CD4-positive, alpha-beta T cell (primary cell): ENCODE measurements at regions of chr9 and their contacts with region 1.

Region 1: GRCh38 chr9:134325817-134326723 is at the start of gene RXRA:
- DNase-seq: peak; percentile 47 to 90 (median 66)
- ATAC-seq: peak; percentile 71
- H3K4me3 ChIP-seq: peak within 1 kb of the TSS; percentile 86
- H3K4me3 Mint-ChIP-seq: peak within 1 kb of the TSS; percentile 83
- H3K27ac ChIP-seq: peak within 1 kb of the TSS in 1 of 2 donors; percentile 2
- H3K27ac Mint-ChIP-seq: peak within 1 kb of the TSS; percentile 20
- H3K4me1 ChIP-seq: peaks cover 25% of the 10 kb centered on the region
- H3K4me1 Mint-ChIP-seq: peaks cover 8% of the 10 kb centered on the region
- H3K27me3 ChIP-seq: no peaks in the 10 kb centered on the region
- H3K27me3 Mint-ChIP-seq: no peaks in the 10 kb centered on the region
- CTCF ChIP-seq: no peak
- total RNA-seq, gene RXRA: 7.3 to 8.4 TPM

Region 2: GRCh38 chr9:134067904-134068743 is 257.9 kb before region 1 on chr9 and contains the start of gene BRD3:
- CTCF ChIA-PET with region 1: no interaction called
- POLR2A ChIA-PET with region 1: no interaction called
- intact Hi-C with region 1: loop called in 1 of 2 experiments (anchors 2 kb)
- DNase-seq: peak; percentile 63 to 96 (median 78)
- ATAC-seq: peak; percentile 76
- H3K4me3 ChIP-seq: peak within 1 kb of the TSS; percentile 79
- H3K4me3 Mint-ChIP-seq: peak within 1 kb of the TSS; percentile 97
- H3K27ac ChIP-seq: peak within 1 kb of the TSS; percentile 79 to 84
- H3K27ac Mint-ChIP-seq: peak within 1 kb of the TSS; percentile 98
- H3K4me1 ChIP-seq: peaks cover 47% of the 10 kb centered on the region
- H3K4me1 Mint-ChIP-seq: peaks cover 37% of the 10 kb centered on the region
- H3K27me3 ChIP-seq: peaks cover 9 to 15% of the 10 kb centered on the region in 2 experiments
- H3K27me3 Mint-ChIP-seq: peaks cover 22% of the 10 kb centered on the region
- CTCF ChIP-seq: no peak
- total RNA-seq, gene BRD3: 26.7 to 29.0 TPM

Region 3: DNA sequence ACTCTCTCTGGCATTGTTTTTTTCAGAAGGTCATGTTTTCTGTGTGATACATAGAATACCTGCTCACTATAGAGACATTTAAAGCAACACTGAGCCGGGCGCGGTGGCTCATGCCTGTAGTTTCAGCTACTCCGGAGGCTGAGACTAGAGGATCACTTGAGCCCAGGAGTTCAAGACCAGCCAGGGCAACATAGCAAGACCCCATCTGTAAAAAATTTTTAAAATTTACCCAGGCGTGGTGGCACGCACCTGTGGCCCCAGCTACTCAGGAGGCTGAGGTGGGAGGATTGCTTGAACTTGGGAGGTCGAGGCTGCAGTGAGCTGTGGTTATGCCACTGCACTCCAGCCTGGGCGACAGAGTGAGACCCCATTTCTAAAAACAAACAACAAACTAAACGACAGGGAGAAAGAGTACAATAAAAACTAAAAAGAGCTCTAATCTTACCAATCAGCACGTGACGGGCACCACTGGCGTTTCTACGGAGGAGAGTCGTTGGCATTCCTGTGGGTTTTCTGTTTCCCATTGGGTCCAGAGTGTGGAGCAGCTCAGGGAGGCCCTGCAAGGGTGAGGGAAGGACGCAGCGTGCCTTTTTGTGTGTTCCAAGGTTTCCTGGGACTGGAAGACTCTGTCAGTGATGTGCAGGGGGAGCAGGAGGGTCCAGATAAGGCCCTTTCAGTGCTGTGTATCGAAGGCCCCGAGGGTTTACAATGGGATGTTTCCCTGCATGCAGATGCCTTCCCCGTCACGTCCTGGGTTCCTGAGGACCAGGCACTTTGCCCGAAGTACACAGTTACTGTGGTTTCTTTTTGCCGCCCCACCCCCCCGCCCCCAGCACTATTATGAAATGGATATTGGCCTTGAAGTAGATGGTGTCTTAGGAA is 154.5 kb before region 1 on chr9:
- CTCF ChIA-PET with region 1: interaction called, 4 read pairs
- POLR2A ChIA-PET with region 1: no interaction called
- intact Hi-C with region 1: loop called in 1 of 2 experiments (anchors 2 kb)
- DNase-seq: no peak
- ATAC-seq: no peak
- H3K4me3 ChIP-seq: no peak overlapping the region
- H3K4me3 Mint-ChIP-seq: no peak overlapping the region
- H3K27ac ChIP-seq: no peak overlapping the region
- H3K27ac Mint-ChIP-seq: no peak overlapping the region
- H3K4me1 ChIP-seq: peaks cover 3% of the 10 kb centered on the region
- H3K4me1 Mint-ChIP-seq: no peaks in the 10 kb centered on the region
- H3K27me3 ChIP-seq: no peaks in the 10 kb centered on the region
- H3K27me3 Mint-ChIP-seq: no peaks in the 10 kb centered on the region
- CTCF ChIP-seq: no peak

Region 4: GRCh38 chr9:134283111-134283515 is 43.0 kb before region 1 on chr9:
- CTCF ChIA-PET with region 1: no interaction called
- POLR2A ChIA-PET with region 1: no interaction called
- intact Hi-C with region 1: no loop called
- DNase-seq: no peak
- ATAC-seq: no peak
- H3K4me3 ChIP-seq: no peak overlapping the region
- H3K4me3 Mint-ChIP-seq: no peak overlapping the region
- H3K27ac ChIP-seq: no peak overlapping the region
- H3K27ac Mint-ChIP-seq: no peak overlapping the region
- H3K4me1 ChIP-seq: no peaks in the 10 kb centered on the region
- H3K4me1 Mint-ChIP-seq: no peaks in the 10 kb centered on the region
- H3K27me3 ChIP-seq: peaks cover 0 to 3% of the 10 kb centered on the region in 2 experiments
- H3K27me3 Mint-ChIP-seq: no peaks in the 10 kb centered on the region
- CTCF ChIP-seq: no peak

Region 5: GRCh38 chr9:134391314-134392231 is 65.5 kb after region 1 on chr9:
- CTCF ChIA-PET with region 1: no interaction called
- POLR2A ChIA-PET with region 1: interaction called, 3 read pairs
- intact Hi-C with region 1: loop called in 1 of 2 experiments (anchors 5 kb)
- DNase-seq: peak; percentile 30 to 94 (median 58)
- ATAC-seq: peak; percentile 70
- H3K4me3 ChIP-seq: peak overlapping the region; percentile 36
- H3K4me3 Mint-ChIP-seq: peak overlapping the region; percentile 88
- H3K27ac ChIP-seq: peak overlapping the region; percentile 88 to 91
- H3K27ac Mint-ChIP-seq: peak overlapping the region; percentile 99
- H3K4me1 ChIP-seq: peaks cover 71% of the 10 kb centered on the region
- H3K4me1 Mint-ChIP-seq: peaks cover 45% of the 10 kb centered on the region
- H3K27me3 ChIP-seq: no peaks in the 10 kb centered on the region
- H3K27me3 Mint-ChIP-seq: no peaks in the 10 kb centered on the region
- CTCF ChIP-seq: no peak

Region 6: GRCh38 chr9:134407123-134407808 is 81.2 kb after region 1 on chr9:
- CTCF ChIA-PET with region 1: no interaction called
- POLR2A ChIA-PET with region 1: no interaction called
- intact Hi-C with region 1: loop called in 1 of 2 experiments (anchors 5 kb)
- DNase-seq: peak; percentile 58 to 91 (median 68)
- ATAC-seq: peak; percentile 83
- H3K4me3 ChIP-seq: peak overlapping the region; percentile 38
- H3K4me3 Mint-ChIP-seq: peak overlapping the region; percentile 66
- H3K27ac ChIP-seq: no peak overlapping the region
- H3K27ac Mint-ChIP-seq: peak overlapping the region; percentile 14
- H3K4me1 ChIP-seq: peaks cover 79% of the 10 kb centered on the region
- H3K4me1 Mint-ChIP-seq: peaks cover 42% of the 10 kb centered on the region
- H3K27me3 ChIP-seq: no peaks in the 10 kb centered on the region
- H3K27me3 Mint-ChIP-seq: no peaks in the 10 kb centered on the region
- CTCF ChIP-seq: no peak

Region 7: DNA sequence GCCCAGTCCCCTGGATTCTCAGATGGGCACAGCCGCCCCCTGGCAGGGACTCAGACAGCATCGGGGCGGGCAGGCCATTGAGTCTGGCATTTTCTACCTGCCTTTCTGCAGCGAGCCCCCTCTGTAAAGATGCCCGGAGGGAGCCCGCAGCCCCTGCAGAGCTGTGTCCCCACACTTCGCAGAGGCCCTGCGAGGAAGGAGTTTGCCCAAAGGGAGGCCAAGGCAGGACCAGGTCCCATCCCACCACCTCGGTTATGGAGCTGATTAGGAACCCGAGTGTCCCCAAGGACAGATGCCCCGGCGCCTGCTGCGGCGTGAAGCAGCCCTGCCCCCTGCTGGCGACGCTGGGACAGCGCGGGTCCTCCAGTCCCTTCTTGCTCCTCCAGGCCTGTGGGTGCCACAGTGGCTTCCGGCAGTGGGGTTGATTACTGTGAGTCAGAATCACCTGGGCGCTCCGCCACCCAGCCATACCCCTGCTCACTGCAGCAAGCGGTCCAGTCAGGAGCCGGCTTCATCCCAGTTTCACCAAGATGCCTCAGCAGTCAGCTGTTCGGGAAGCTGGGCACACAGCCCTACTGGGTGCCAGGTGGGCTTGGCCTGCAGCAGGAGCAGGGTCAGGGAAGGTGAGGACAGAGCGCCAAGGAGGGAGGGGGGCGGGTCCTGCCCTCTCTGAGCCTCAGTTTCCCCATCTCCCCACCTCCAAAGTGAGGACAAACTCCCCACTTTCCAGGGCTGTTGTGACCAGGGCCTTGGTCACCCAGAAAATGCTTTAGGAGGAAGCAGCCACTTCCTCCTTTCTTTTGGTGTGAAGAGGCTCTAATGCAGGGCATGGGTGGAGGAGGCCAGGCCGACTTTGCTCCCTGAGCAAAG is 117.3 kb after region 1 on chr9:
- CTCF ChIA-PET with region 1: interaction called, 3 read pairs
- POLR2A ChIA-PET with region 1: interaction called, 3 read pairs
- intact Hi-C with region 1: loop called in 1 of 2 experiments (anchors 2 kb)
- DNase-seq: peak; percentile 76 to 94 (median 86)
- ATAC-seq: peak; percentile 100
- H3K4me3 ChIP-seq: no peak overlapping the region
- H3K4me3 Mint-ChIP-seq: no peak overlapping the region
- H3K27ac ChIP-seq: no peak overlapping the region
- H3K27ac Mint-ChIP-seq: peak overlapping the region; percentile 80
- H3K4me1 ChIP-seq: peaks cover 25% of the 10 kb centered on the region
- H3K4me1 Mint-ChIP-seq: peaks cover 25% of the 10 kb centered on the region
- H3K27me3 ChIP-seq: peaks cover 6 to 9% of the 10 kb centered on the region in 2 experiments
- H3K27me3 Mint-ChIP-seq: peaks cover 5% of the 10 kb centered on the region
- CTCF ChIP-seq: peak; percentile 91

Region 8: GRCh38 chr9:135500525-135501358 is 1174.7 kb after region 1 on chr9 and contains the start of gene MRPS2:
- CTCF ChIA-PET with region 1: no interaction called
- POLR2A ChIA-PET with region 1: no interaction called
- intact Hi-C with region 1: loop called in 1 of 2 experiments (anchors 10 kb)
- DNase-seq: peak; percentile 65 to 91 (median 82)
- ATAC-seq: peak; percentile 91
- H3K4me3 ChIP-seq: peak within 1 kb of the TSS; percentile 97
- H3K4me3 Mint-ChIP-seq: peak within 1 kb of the TSS; percentile 97
- H3K27ac ChIP-seq: peak within 1 kb of the TSS in 1 of 2 donors; percentile 41
- H3K27ac Mint-ChIP-seq: peak within 1 kb of the TSS; percentile 76
- H3K4me1 ChIP-seq: peaks cover 46% of the 10 kb centered on the region
- H3K4me1 Mint-ChIP-seq: peaks cover 24% of the 10 kb centered on the region
- H3K27me3 ChIP-seq: no peaks in the 10 kb centered on the region
- H3K27me3 Mint-ChIP-seq: no peaks in the 10 kb centered on the region
- CTCF ChIP-seq: peak; percentile 83
- total RNA-seq, gene MRPS2: 20.8 to 23.2 TPM